AG04450 (cell line): ENCODE measurements at regions of chr1 and their contacts with region 1.

Region 1: DNA sequence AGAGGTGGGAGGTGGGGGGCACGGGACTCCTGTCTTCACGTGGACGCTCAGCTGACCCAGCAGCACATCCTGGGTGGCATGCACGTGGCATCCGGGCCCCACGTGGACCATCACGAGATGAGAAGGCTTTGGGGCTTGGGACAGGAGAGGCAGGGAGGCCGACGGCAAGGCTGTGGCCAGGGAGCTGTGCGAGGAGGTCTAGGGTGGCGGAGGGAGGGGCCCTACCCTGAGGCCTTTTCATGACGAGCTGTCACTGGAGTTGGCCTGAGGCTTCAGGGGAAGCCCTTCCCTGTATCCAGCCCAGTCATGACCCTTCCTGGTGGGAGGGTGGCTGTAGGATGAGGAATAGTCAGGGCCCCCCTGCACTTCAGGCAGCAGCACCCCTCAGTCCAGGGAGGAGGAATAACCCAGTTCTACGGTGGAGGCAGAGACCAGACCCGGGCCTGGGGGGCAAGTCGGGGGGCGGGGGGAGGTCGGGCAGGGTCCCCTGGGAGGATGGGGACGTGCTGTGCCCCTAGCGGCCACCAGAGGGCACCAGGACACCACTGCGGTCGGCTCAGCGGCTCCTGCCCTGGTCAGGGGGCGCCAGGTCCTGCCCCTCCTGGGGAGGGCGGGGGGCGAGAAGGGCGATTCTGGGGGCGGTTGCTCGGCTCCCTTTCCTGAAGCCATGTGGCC is 2.0 kb upstream of the PERM1 start:
- DNase-seq: no peak
- H3K4me3 ChIP-seq: peak overlapping the region; percentile 17
- H3K27ac ChIP-seq: no peak overlapping the region
- H3K27me3 ChIP-seq: peaks cover 35% of the 10 kb centered on the region
- CTCF ChIP-seq: peak; percentile 78

Region 2: GRCh38 chr1:995665-996633 is 12.0 kb after region 1 on chr1:
- CTCF ChIA-PET with region 1: interaction called, 14 read pairs
- POLR2A ChIA-PET with region 1: no interaction called
- DNase-seq: no peak
- H3K4me3 ChIP-seq: no peak overlapping the region
- H3K27ac ChIP-seq: no peak overlapping the region
- H3K27me3 ChIP-seq: peaks cover 12% of the 10 kb centered on the region
- CTCF ChIP-seq: no peak

Region 3: GRCh38 chr1:1063945-1064831 is 80.3 kb after region 1 on chr1:
- CTCF ChIA-PET with region 1: interaction called, 15 read pairs
- POLR2A ChIA-PET with region 1: no interaction called
- DNase-seq: peak; percentile 63
- H3K4me3 ChIP-seq: peak overlapping the region; percentile 38
- H3K27ac ChIP-seq: peak overlapping the region; percentile 39
- H3K27me3 ChIP-seq: peaks cover 3% of the 10 kb centered on the region
- CTCF ChIP-seq: peak; percentile 71; the same call in 1 of the 2 replicates